Sigmoid colon (tissue), 7 donors: ENCODE measurements at regions of chr7 and their contacts with region 1.

Region 1: DNA sequence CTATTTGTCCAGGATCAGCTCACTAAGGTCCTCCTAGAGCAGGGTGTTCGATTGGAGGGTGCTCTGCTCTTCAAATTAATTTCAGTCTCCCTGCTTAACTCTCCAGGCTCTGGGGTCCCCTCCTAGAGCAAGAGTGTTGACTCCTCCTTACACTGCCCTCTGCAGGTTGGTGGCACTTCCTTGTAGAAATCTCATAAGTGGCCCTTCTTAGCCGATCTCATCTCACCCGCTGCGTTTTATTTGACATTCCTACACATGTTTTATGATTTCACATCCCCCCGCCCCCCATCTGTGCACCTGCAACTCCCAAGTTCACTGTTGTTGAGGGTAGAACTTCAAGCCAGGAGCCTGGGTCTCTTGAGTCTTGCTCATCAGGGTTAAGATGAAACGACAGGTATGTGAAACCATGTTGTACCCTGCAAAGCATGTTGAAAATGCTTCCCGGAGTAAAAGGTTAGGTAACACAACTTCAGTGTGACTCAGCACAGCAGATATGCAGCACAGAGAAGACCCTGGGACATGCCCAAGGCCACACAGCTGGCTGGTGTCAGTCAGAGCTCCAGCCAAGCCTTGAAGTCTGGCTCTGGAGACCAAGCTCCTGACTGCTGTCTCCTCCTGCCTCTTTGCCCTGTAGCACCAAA is 171.2 kb downstream of the PRKAG2 start:
- DNase-seq: no peak
- H3K4me3 ChIP-seq: peak overlapping the region in 2 of 4 donors; percentile 1 to 5
- H3K27ac ChIP-seq: peak overlapping the region in 1 of 4 donors; percentile 32
- H3K4me1 ChIP-seq: peaks cover 0 to 19% (median 12%) of the 10 kb centered on the region in 4 donors
- H3K27me3 ChIP-seq: no peaks in the 10 kb centered on the region
- CTCF ChIP-seq: peak in 3 of 4 experiments; percentile 42 to 49 (median 49)
- EP300 ChIP-seq: no peak
- POLR2A ChIP-seq: no peak

Region 2: GRCh38 chr7:151626422-151627115 is 79.2 kb before region 1 on chr7:
- intact Hi-C with region 1: loop called (anchors 2 kb)
- DNase-seq: no peak
- H3K4me3 ChIP-seq: no peak overlapping the region
- H3K27ac ChIP-seq: peak overlapping the region in 3 of 4 donors; percentile 40 to 95 (median 95)
- H3K4me1 ChIP-seq: peaks cover 0 to 72% (median 56%) of the 10 kb centered on the region in 4 donors
- H3K27me3 ChIP-seq: no peaks in the 10 kb centered on the region
- CTCF ChIP-seq: peak in 3 of 4 experiments; percentile 44 to 54 (median 51)
- EP300 ChIP-seq: no peak
- POLR2A ChIP-seq: no peak

Region 3: DNA sequence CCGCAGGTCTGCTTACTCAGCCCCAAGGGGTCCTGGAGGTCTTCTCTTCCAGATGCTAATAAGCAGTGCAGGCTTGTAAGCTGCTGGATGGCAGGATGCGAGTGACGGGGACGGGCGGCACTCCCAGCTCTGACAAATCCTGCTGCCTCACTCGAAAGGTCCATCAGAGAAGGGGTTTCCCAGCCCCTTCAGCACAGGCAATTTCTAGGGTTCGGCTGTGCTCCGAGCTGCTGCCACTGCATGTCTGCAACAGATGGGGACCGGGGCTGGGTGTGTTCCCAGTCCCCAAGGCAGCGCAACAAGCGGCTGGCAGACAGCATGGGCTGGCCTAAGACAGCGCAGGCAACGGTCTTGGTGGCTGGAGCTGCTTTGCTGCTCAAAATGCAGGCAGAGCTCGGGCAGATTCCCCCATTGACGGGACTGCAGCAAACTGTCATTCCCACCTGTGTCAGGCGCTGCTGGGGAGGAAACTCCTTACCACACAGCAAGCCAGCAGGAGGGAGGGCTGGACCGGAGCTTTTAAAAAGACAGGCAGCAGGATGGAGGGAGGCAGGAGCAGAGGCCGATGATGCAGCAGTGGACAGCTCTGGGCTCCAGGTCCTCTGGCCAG is 108.7 kb after region 1 on chr7:
- intact Hi-C with region 1: no loop called
- DNase-seq: no peak
- H3K4me3 ChIP-seq: no peak overlapping the region
- H3K27ac ChIP-seq: no peak overlapping the region
- H3K4me1 ChIP-seq: no peaks in the 10 kb centered on the region
- H3K27me3 ChIP-seq: no peaks in the 10 kb centered on the region
- CTCF ChIP-seq: no peak
- EP300 ChIP-seq: no peak
- POLR2A ChIP-seq: no peak

Region 4: DNA sequence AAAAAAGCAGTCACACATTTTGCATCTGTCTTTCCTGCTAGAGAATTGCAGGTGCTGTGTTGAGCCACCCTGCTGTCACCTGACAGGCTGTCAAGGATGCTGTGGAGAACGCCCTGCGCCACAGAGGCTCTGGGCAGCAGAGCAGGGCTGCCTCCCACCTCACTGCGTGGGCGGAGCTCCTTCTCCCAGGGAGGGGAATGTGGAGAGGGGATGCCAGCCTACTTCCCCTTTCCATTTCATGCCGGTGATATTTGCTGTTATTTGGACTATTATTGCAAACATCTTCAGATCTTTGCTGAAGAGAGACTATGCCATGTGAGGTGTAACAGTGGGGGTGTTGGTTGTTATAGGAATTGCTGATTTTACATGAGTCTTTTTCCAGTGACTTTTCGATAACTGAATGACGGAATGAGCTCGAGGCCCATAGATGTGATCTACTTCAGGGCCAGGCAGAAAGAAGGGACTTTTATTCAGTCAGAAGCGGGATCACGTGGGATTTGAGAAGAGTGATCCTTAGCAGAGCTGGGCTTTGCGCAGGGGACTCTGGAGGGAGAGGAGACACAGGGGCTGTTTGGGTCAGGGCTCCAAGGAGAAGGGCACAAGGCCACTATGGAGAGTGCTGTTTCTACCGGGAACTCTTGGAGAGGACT is 184.7 kb after region 1 on chr7:
- intact Hi-C with region 1: no loop called
- DNase-seq: no peak
- H3K4me3 ChIP-seq: no peak overlapping the region
- H3K27ac ChIP-seq: no peak overlapping the region
- H3K4me1 ChIP-seq: no peaks in the 10 kb centered on the region
- H3K27me3 ChIP-seq: peaks cover 0 to 10% (median 0%) of the 10 kb centered on the region in 3 donors
- CTCF ChIP-seq: no peak
- EP300 ChIP-seq: no peak
- POLR2A ChIP-seq: no peak